ENCODE measurements at regions of chr16 and their contacts with region 1.

Region 1: DNA sequence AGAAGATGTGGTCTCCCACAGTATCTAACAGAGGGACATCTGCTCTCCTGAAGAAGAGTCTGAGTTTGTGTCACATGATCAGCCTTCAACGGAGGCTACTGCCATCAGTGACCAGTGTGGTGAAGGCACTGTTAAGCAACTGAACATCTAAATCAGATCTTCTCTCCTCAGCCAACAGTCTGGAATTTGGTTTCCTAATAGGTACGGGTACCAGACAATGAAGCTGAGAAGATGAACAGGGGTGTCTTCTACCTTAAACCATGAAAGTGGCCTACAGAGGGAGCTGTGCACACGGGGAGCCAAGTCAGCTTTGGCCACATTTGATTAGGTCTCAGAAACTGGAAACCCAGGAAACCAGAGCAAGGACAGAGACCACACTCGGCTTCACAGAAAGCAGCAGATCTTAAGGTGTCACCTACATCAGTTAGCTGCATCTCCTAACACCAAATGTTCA is 41.8 kb downstream of the BRD7 start:
- DNase-seq: no peak
- ATAC-seq: peak; percentile 80
- H3K4me3 Mint-ChIP-seq: no peak overlapping the region
- H3K27ac Mint-ChIP-seq: peak overlapping the region; percentile 68
- H3K4me1 Mint-ChIP-seq: peaks cover 53% of the 10 kb centered on the region
- H3K27me3 Mint-ChIP-seq: no peaks in the 10 kb centered on the region
- CTCF ChIP-seq: no peak

Region 2: DNA sequence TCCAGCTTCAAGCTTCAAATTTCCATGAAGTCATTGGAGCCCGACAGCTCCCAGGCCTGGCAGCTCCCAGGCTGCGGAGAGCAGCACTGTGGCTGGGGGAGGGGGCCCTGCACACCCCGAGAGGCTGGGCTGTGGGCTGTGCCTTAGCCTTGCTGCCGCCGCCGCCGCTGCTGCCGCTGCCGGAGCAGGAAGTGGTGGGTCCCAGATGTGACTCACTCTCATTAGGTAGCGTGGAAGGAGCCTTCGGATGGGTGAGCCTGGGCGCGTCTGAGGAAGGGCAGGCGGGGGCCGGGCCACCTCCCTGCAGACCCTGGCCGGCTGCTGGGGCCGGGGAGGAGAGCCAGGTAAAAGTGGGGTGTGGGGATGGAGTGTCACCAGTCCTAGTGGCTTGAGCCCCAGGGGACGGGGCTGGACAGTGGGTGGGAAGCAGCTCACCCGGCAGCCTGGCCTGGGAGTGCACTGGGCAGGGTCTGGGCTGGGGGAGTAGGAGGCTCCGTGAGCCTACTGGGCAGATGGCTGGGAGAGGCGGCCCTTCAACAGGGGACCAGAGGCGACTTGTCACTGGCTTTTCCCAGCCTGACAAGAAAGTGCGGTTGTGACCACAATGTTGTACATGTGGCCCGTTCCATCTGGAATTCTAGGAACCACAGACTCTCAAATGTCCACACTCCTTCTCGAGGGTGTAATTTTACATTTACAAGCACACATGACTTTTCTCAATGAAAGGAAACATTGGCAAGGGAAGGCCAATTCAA is 60.5 kb before region 1 on chr16 and contains the start of gene ADCY7:
- CTCF ChIA-PET with region 1: interaction called, 6 read pairs
- POLR2A ChIA-PET with region 1: no interaction called
- intact Hi-C with region 1: loop called (anchors 2 kb)
- DNase-seq: peak; percentile 61
- ATAC-seq: peak; percentile 93
- H3K4me3 Mint-ChIP-seq: peak within 1 kb of the TSS; percentile 84
- H3K27ac Mint-ChIP-seq: peak within 1 kb of the TSS; percentile 90
- H3K4me1 Mint-ChIP-seq: peaks cover 70% of the 10 kb centered on the region
- H3K27me3 Mint-ChIP-seq: no peaks in the 10 kb centered on the region
- CTCF ChIP-seq: no peak
- total RNA-seq, gene ADCY7: 109 and 128 TPM in 2 replicates

Region 3: DNA sequence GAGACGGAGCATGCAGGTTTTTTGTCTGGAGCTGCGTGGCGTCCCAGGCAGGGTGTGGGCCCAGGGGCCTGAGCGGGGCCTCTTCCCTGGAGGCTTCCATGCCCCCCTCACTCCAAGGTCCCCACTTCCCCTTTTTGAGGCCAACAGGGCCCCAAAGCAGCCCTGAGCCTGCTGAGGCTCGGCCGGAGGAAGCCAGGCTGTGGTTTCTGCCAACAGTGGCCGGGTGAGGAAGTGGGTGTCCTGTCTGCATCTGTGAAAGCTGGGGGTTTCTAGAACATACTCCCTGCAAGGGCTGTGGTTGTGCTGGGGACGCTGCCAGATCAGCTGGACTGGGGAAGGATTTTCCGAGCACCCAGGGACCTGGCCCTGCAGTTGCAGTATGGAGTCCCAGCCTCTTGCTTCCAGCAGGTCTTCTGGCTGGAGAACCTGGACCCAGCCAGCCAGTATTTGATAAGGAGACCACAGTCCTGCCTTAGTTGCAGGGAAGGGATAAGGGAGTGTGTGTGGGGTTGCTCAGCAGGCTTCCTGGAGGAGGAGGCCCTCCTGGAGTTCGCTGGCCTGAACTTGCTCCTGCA is 44.9 kb before region 1 on chr16:
- CTCF ChIA-PET with region 1: interaction called, 9 read pairs
- POLR2A ChIA-PET with region 1: interaction called, 9 read pairs
- intact Hi-C with region 1: loop called (anchors 5 kb)
- DNase-seq: peak; percentile 74
- ATAC-seq: peak; percentile 86
- H3K4me3 Mint-ChIP-seq: peak overlapping the region; percentile 69
- H3K27ac Mint-ChIP-seq: peak overlapping the region; percentile 100
- H3K4me1 Mint-ChIP-seq: peaks cover 90% of the 10 kb centered on the region
- H3K27me3 Mint-ChIP-seq: no peaks in the 10 kb centered on the region
- CTCF ChIP-seq: no peak

Region 4: GRCh38 chr16:50354629-50355456 is 27.9 kb after region 1 on chr16:
- CTCF ChIA-PET with region 1: interaction called, 117 read pairs
- POLR2A ChIA-PET with region 1: interaction called, 5 read pairs
- intact Hi-C with region 1: loop called (anchors 1 kb)
- DNase-seq: no peak
- ATAC-seq: no peak
- H3K4me3 Mint-ChIP-seq: no peak overlapping the region
- H3K27ac Mint-ChIP-seq: no peak overlapping the region
- H3K4me1 Mint-ChIP-seq: peaks cover 12% of the 10 kb centered on the region
- H3K27me3 Mint-ChIP-seq: no peaks in the 10 kb centered on the region
- CTCF ChIP-seq: peak; percentile 75

Region 5: GRCh38 chr16:50644729-50645128 is 317.8 kb after region 1 on chr16:
- CTCF ChIA-PET with region 1: interaction called, 10 read pairs
- POLR2A ChIA-PET with region 1: no interaction called
- intact Hi-C with region 1: no loop called
- DNase-seq: no peak
- ATAC-seq: peak; percentile 72
- H3K4me3 Mint-ChIP-seq: no peak overlapping the region
- H3K27ac Mint-ChIP-seq: no peak overlapping the region
- H3K4me1 Mint-ChIP-seq: no peaks in the 10 kb centered on the region
- H3K27me3 Mint-ChIP-seq: peaks cover 19% of the 10 kb centered on the region
- CTCF ChIP-seq: no peak

Region 6: GRCh38 chr16:50747207-50747956 is 420.4 kb after region 1 on chr16:
- CTCF ChIA-PET with region 1: interaction called, 7 read pairs
- POLR2A ChIA-PET with region 1: no interaction called
- intact Hi-C with region 1: loop called (anchors 1 kb)
- DNase-seq: no peak
- ATAC-seq: peak; percentile 61
- H3K4me3 Mint-ChIP-seq: peak overlapping the region; percentile 45
- H3K27ac Mint-ChIP-seq: peak overlapping the region; percentile 11
- H3K4me1 Mint-ChIP-seq: peaks cover 53% of the 10 kb centered on the region
- H3K27me3 Mint-ChIP-seq: no peaks in the 10 kb centered on the region
- CTCF ChIP-seq: no peak

Region 7: GRCh38 chr16:51898872-51899271 is 1571.9 kb after region 1 on chr16:
- CTCF ChIA-PET with region 1: no interaction called
- POLR2A ChIA-PET with region 1: no interaction called
- intact Hi-C with region 1: no loop called
- DNase-seq: no peak
- ATAC-seq: no peak
- H3K4me3 Mint-ChIP-seq: no peak overlapping the region
- H3K27ac Mint-ChIP-seq: no peak overlapping the region
- H3K4me1 Mint-ChIP-seq: no peaks in the 10 kb centered on the region
- H3K27me3 Mint-ChIP-seq: no peaks in the 10 kb centered on the region
- CTCF ChIP-seq: no peak

Measured in activated B cell treated with CpG ODN at 0.5 μM for 24 hours (primary cell).